Motor neuron (in vitro differentiated cells): ENCODE measurements at regions of chr6 and their contacts with region 1.

Region 1: DNA sequence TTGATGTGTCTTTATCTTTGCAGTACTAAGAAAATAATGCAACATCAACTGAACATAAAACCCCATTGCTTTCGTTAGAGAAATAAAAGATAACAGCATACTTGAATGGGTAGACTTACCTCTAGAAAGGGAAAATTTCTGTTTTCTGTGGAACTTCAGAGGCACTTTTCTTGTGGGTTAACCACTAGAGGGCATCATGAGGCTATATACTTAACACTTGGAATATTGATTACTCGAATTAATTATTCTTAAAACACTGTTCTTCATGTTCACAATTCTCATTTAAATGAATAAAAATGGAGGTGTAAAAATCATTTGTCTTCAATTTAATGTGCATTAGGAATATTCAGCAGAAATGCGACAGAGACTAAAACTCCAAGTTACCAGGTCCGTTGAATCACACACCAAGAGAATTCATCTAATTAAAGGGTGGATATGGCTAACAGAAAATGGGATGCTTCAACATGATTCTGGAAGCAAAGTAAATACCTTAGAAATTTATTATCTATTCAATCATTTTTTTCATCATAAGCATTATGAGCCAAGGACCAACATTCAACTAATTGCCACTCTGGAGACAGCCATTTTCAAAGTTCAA is 330.8 kb upstream of the PREP start:
- ATAC-seq: no peak
- H3K4me3 ChIP-seq: no peak overlapping the region
- H3K27ac ChIP-seq: no peak overlapping the region
- H3K4me1 ChIP-seq: no peaks in the 10 kb centered on the region

Region 2: GRCh38 chr6:105844275-105844883 is 110.7 kb after region 1 on chr6:
- in situ Hi-C with region 1: no loop called
- ATAC-seq: no peak
- H3K4me3 ChIP-seq: no peak overlapping the region
- H3K27ac ChIP-seq: no peak overlapping the region
- H3K4me1 ChIP-seq: no peaks in the 10 kb centered on the region

Region 3: DNA sequence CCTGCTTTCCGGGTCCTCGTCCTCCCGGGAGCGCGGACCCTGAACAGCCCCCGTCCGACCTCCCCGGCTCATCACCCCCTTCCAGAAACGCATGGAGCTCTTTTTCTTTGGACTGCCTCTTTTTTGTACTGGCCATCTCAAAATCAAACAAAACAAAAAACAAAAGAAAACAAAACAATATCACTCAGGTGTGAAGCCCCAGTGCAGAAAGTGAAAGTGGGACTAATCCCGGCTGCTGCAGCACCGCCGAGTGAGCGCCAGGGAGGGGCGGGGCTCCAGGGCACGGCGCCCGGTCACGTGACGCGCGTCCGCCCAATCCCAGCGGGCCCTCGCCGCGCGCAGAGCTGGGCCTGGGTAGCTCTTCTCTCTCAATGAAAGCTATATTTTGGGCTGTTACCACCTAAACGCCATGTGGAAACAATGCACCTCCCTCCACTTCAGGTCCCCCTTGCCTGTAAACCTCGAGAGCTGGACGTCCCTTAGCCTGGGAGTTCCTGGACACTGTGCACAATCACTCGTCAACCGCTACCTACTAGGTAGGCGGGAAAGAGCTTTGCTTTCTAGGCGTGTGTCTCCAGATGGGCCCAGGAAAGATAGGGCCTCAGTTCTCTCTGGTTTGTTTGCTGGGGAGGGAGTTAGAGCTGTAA is 258.8 kb after region 1 on chr6:
- in situ Hi-C with region 1: loop called in 1 of 9 experiments (anchors 25 kb)
- ATAC-seq: peak; percentile 52 to 98 (median 96)
- H3K4me3 ChIP-seq: peak overlapping the region; percentile 43 to 54 (median 47)
- H3K27ac ChIP-seq: no peak overlapping the region
- H3K4me1 ChIP-seq: peaks cover 0 to 3% of the 10 kb centered on the region in 2 donors

Region 4: DNA sequence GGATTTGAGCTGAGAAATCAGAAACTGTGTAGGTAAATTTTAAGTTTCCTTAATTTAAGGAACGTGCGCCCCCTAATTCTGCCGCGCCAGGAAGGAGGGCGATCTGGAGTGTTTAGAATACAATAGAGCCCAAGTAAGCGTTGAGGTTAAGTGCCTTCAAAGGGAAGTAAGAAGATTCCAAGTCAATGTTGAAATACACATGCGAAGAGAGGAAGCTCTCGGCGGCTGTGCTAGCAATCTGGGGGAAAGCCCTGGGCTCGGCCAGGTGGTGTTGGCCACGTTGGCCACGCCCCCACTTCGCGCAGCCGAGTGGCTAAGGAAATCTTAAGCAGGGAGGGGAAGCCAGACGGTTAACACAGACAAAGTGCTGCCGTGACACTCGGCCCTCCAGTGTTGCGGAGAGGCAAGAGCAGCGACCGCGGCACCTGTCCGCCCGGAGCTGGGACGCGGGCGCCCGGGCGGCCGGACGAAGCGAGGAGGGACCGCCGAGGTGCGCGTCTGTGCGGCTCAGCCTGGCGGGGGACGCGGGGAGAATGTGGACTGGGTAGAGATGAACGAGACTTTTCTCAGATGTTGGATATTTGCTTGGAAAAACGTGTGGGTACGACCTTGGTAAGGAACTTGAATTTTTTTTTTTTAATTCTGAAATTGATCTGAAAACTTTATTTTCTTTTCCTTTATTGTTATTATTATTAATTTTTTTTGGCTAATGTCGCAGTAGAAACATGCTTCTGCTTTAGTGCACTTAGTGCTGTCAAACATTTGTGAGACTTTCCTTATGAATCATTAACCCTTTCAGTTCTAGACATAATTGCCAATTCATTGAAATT is 352.5 kb after region 1 on chr6 and contains the start of gene PRDM1:
- in situ Hi-C with region 1: loop called in 1 of 9 experiments (anchors 25 kb)
- ATAC-seq: peak; percentile 76 to 97 (median 94)
- H3K4me3 ChIP-seq: peak within 1 kb of the TSS; percentile 23 to 37 (median 28)
- H3K27ac ChIP-seq: no peak within 1 kb of the TSS
- H3K4me1 ChIP-seq: peaks cover 0 to 4% of the 10 kb centered on the region in 2 donors
- total RNA-seq, gene PRDM1: 0.23 to 4.3 (median 2.0) TPM